HEK293T (cell line): ENCODE measurements at regions of chr1 and their contacts with region 1.

Region 1: DNA sequence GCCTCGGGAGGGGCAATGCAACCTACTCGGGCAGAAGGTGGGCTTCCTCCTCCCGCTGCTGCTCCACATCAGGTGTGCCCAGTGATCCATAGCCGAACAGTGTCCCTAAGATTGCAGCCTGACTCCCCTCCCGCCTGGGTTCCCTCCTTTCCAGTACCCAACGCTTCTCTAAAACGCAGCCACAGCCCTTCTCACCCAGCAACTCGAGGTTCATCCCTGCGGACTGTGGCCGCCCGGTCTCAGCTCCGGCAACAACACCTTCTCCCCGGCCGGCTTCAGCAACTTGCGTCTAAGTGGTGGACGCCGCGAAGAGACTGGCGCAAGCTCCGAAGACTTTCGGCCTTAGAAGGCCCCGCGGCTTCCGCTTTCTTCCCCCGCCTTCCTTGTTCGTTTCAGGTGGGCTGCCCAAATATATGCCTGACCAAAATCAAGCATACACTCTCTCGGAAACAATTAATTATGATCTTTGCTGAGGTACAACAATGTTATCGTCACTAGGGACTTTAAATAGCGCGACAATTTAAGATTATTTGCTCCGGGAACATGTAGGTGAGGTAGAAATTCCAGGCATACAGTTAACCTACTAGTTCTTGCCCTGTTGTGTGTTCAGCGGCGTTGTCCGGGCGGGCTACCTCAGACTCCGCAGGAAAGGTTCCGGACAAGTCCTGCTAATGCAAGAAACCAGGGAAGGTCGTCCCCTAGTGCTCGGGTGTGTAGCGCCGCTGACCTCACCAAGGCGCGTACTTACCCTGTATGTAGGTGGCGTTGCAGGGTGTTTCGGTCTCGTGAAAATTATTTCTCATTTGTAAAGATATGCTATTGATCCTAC is at the start of gene RBBP5:
- DNase-seq: peak; percentile 95

Region 2: DNA sequence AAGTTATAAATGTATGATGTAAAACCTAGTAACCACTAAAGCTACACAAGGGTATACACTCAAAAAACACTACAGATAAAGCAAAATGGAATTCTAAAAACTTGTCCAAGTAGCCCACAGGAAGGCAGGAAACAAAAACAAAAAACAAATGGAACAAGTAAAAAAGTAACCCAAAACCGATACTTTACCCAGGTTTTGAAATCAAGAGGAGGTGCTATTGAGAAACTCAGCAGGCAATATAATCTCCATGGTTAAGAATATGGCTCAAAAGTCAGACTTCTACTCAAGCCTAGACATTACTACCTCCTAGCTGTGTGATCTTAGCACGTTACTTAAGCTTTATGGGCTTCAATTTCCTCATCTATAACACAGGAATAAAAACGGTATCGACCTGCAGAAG is 13.4 kb before region 1 on chr1:
- CTCF ChIA-PET with region 1: no interaction called
- POLR2A ChIA-PET with region 1: interaction called, 13 read pairs
- DNase-seq: no peak